ENCODE measurements at regions of chr6 and their contacts with region 1.

Region 1: DNA sequence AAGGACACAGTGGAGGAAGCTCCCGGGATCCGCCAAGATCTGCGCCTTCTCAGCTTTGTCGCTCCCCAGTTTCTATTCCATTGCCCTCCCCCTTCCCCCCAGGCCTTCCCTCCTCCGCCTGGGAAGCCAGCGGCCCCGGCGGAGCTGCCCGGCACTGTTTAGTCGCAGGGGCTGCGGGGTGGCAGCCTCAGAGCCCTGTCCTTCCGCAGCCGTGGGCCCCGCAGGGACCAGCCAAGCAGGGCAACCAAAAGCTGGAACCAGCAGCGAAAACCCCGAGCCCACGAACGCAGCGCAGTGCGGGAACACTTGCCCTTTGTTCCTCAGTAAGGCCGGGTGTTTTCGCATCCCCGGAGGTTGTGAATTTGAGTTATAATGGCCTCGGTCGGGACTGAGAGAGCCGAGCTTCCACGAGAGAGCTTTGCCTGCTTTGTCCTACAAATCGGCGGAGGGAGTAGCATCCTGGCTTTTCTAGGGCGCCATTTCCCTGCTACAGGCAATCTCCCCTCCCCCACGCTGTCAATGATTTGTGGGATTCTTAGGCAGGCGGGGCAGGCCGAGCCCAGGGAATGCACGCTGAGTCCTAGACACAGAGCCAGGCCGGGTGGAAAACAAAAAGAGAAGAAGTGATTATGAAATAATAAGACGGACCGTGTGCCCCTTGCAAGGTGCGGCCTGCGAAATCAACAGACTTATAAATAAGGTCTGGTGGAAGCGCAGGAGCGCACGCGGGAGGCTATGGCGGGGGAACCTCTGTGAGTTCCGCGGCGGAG is 4.0 kb upstream of the TUBB2B start:
- DNase-seq: no peak
- H3K4me3 Mint-ChIP-seq: no peak overlapping the region
- H3K27ac Mint-ChIP-seq: peak overlapping the region; percentile 3
- H3K4me1 Mint-ChIP-seq: peaks cover 42% of the 10 kb centered on the region
- H3K27me3 Mint-ChIP-seq: peaks cover 76% of the 10 kb centered on the region

Region 2: DNA sequence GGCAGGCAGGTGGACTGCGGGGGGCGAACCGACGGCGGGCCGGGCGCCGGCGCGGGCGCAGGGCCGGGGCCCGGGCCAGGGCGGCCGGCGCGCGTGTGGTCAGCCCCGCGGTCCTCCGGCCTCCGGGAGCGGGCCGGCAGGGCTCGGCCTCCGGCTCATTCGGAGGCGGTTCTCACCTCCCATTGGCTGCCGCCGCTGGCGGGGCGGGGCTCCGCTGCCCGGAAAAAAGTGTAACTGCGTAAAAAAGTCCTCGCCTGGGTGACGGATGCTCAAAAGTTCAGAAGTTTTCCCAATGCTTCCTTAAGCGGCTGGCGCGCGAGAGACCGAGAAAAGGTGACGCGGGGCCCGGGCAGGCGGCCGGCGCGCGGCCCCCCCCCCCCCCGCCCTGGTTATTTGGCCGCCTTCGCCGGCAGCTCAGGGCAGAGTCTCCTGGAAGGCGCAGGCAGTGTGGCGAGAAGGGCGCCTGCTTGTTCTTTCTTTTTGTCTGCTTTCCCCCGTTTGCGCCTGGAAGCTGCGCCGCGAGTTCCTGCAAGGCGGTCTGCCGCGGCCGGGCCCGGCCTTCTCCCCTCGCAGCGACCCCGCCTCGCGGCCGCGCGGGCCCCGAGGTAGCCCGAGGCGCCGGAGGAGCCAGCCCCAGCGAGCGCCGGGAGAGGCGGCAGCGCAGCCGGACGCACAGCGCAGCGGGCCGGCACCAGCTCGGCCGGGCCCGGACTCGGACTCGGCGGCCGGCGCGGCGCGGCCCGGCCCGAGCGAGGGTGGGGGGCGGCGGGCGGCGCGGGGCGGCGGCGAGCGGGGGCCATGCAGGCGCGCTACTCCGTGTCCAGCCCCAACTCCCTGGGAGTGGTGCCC is 1621.6 kb before region 1 on chr6 and contains the start of gene FOXC1:
- intact Hi-C with region 1: loop called (anchors 5 kb)
- DNase-seq: peak; percentile 34
- H3K4me3 Mint-ChIP-seq: peak within 1 kb of the TSS; percentile 70
- H3K27ac Mint-ChIP-seq: peak within 1 kb of the TSS; percentile 79
- H3K4me1 Mint-ChIP-seq: peaks cover 25% of the 10 kb centered on the region
- H3K27me3 Mint-ChIP-seq: peaks cover 62% of the 10 kb centered on the region
- total RNA-seq, gene FOXC1: 0.23 and 0.44 TPM in 2 replicates

Region 3: DNA sequence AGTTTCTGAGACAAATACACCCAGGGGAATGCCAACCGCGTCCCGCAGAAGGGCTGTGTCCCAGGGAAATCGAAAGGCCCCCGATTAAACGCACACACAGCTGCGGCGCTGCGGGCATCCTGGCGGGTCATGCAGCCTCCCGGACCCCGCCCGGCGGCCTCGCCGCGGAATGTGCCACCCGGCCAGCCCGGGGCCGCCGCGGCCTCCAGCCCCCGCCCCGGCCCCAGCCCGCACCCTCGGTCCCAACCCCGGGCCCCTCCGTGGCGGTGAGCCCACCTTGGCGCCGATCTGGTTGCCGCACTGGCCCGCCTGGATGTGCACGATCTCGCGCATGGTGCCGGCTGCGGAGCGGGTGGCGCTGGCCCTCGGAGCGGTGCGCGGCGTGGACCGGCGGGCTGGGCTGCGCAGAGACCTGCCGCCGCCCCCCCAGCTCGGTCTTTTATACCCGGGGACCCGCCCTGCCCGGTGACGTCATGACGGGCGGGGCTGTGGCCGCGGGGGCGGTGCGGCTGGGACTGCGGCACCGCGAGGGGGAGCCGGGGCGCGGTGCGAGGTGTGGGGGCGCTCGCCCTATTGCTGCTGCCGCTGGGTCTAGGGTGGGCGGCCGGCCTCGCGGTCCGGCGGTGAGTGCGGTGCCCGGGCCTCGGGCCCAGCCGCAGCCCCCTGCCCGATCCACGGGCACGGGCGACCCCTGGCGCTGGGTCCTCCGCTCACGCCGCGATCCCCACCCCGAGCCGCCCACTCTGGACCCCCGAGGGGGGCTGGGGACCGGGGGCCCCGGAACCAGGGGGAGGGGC is 74.1 kb before region 1 on chr6 and contains the start of gene TUBB2A:
- intact Hi-C with region 1: loop called (anchors 2 kb)
- DNase-seq: peak; percentile 83
- H3K4me3 Mint-ChIP-seq: peak within 1 kb of the TSS; percentile 86
- H3K27ac Mint-ChIP-seq: peak within 1 kb of the TSS; percentile 76
- H3K4me1 Mint-ChIP-seq: peaks cover 22% of the 10 kb centered on the region
- H3K27me3 Mint-ChIP-seq: peaks cover 54% of the 10 kb centered on the region
- total RNA-seq, gene TUBB2A: 5.2 and 5.6 TPM in 2 replicates

Region 4: DNA sequence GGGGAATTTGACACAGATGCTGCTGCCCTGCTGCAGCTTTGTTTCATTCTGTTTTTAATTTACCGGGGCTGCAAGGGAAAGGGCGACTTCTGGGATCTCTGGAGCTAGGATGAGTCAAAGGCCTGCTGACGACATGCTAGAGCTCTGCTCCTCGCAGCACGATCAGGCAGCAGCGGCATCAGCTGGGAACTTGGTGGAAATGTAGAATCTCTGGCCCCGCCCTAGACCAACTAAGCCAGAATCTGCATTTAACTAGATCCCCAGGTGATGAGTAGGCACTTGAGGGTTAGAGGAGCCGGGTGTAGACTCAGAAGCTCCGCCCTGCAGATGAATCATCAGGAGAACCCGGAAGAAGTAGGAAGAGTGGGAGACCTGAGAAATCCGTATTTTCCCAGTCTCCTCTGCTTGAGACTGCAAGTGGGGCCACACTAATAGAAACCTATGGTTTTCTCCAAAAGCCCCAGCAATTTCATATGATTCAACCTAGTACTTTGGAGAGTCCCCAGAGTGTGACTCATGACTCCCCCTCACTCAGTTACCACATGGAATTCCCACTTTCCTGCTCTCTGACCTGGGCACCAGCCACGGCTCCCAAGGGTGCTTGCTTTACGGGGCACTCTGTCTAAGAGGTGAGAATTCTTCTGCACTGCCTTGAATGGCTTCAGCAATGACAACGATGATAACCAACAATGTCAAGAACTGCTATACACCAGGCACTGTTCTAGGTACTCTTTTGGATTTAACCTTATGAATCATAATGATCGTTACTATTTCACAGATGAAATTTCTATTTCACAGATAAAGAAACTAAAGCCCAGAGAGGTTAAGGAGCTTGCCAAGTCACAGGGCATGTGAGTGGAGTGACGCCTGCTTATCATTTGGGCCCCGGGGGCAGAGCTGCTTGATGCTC is 22.1 kb before region 1 on chr6:
- intact Hi-C with region 1: loop called (anchors 2 kb)
- DNase-seq: no peak
- H3K4me3 Mint-ChIP-seq: peak overlapping the region; percentile 43
- H3K27ac Mint-ChIP-seq: peak overlapping the region; percentile 89
- H3K4me1 Mint-ChIP-seq: peaks cover 41% of the 10 kb centered on the region
- H3K27me3 Mint-ChIP-seq: peaks cover 23% of the 10 kb centered on the region

Region 5: DNA sequence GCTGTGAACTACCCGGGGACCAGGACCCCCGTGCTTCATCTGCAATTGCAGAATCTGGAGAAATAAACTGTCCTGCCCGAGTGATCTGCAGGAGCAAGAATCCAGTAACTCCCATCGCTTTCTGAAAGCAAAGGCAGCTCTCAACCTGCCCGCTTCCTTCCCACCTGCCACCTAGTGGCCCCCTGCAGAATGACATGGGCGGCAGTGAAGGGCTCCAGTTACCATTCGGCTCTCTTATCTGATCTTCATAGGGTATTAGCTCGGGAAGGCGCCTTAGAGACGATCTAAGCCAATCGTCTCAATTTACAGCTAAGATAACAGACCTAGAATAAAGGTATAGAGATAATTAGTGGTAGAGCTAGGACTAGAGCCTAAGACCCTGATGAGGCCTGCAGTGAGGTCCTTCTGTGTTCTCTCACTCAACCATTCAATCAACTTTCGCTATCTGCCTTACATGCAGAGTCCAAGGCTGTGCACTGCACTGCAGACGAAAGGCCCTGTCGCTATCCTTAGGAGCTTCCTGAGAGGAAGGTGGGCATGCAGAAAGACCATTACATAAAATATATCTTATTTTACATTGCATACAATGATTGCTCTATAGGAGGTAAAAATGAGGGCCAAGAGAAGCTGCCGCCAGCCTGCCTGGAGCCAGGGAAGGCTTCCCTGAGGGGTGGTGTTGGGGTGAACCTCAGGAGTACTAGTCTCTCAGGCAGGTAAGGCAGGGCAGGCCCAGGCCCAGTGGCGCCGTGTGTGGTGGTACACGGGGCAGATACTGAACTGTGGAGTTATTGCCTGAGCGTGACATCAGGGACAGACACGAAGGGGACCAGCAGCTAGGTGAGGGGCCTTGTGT is 20.3 kb after region 1 on chr6:
- intact Hi-C with region 1: no loop called
- DNase-seq: peak; percentile 75
- H3K4me3 Mint-ChIP-seq: no peak overlapping the region
- H3K27ac Mint-ChIP-seq: no peak overlapping the region
- H3K4me1 Mint-ChIP-seq: peaks cover 14% of the 10 kb centered on the region
- H3K27me3 Mint-ChIP-seq: peaks cover 30% of the 10 kb centered on the region

Region 6: GRCh38 chr6:3456755-3457466 is 225.5 kb after region 1 on chr6 and contains the start of gene SLC22A23:
- intact Hi-C with region 1: loop called (anchors 2 kb)
- DNase-seq: peak; percentile 42
- H3K4me3 Mint-ChIP-seq: peak within 1 kb of the TSS; percentile 81
- H3K27ac Mint-ChIP-seq: peak within 1 kb of the TSS; percentile 70
- H3K4me1 Mint-ChIP-seq: peaks cover 7% of the 10 kb centered on the region
- H3K27me3 Mint-ChIP-seq: peaks cover 46% of the 10 kb centered on the region
- total RNA-seq, gene SLC22A23: 0.05 and 0.39 TPM in 2 replicates

Region 7: DNA sequence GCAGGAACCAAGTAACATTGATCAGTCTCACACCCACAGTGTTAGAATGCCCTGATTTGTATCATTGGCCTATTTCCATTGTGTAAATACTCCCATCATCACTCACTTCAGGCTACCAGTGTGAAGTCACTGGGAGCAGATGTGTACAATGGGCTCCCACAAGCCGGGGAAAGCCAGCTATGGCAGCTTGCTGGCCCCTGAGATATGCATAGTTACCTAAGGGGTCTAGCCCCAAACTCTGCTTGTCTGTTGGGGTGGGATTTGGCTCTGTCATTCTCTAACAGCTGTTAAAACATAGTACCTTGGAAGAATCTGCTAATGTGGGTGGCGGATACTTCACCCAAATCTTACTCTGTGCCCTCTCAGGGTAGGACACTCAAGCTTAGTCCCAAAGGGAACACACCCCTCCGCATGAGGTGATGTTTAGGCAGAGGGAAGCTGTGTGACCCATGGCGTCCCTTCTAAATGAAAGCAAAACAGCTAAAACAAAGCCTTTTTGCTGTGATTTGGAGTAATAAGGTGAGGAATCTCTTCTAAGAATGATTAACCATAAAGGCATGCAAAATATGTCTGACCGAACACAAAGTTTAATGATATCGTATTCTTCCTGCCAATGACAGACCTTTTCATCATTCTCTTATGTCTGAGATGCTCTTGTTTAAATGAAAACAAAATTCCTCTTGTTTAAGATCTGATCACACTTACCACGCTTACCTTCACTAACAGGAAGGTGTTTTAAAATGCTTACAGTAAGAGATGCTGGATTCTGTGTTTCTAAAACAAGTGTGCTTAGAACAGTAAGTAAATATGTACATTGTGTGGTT is 566.0 kb after region 1 on chr6:
- intact Hi-C with region 1: no loop called
- DNase-seq: no peak
- H3K4me3 Mint-ChIP-seq: no peak overlapping the region
- H3K27ac Mint-ChIP-seq: no peak overlapping the region
- H3K4me1 Mint-ChIP-seq: no peaks in the 10 kb centered on the region
- H3K27me3 Mint-ChIP-seq: peaks cover 1% of the 10 kb centered on the region

Measured in activated T-helper 1 cell treated with anti-CD3 and anti-CD28 coated beads, Interleukin-12 subunit alpha, Interleukin-12 subunit beta, Interleukin-2, Interleukin-4 antibody, amounts not matched to agents 30 ng/mL and 10 ng/mL and 1 ng/mL, durations not matched to agents 14 hours and 24 hours and 36 hours (primary cell).